ENCODE measurements at regions of chr19 and their contacts with region 1.

Region 1: DNA sequence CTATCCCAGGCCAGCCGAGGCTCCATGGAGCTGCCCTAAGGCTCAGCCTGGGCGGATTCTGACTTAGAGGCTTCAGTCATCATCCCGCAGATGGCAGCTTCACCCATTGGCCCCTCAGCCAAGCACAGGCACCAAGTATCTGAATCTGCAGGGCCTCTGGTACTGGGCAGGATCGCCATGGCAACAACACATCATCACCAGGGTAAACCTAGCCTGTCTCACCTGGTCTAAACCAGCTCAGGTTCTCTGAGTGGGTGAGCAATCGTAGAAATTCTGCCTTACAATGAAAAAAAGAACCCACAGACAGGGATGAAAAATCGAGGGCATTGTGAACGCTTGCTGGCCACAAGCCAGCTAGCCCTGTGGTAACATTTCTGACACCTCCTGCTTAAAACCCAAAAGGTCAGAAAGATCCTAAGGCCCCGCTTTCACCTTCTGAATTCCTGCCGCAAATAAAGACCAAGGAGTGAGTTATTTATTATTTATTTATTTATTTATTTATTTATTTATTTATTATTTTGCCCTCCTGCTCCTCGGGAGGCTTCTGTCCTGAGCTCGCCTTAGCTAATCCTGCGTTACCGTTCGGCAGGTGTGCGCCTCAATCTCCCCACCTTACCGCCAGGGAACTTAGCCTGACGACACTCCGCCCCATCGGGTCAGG is 12.0 kb upstream of the CEACAM21 start:
- DNase-seq: no peak
- H3K4me3 ChIP-seq: no peak overlapping the region
- H3K27ac ChIP-seq: no peak overlapping the region
- H3K4me1 ChIP-seq: peaks cover 3% of the 10 kb centered on the region
- H3K27me3 ChIP-seq: peaks cover 28 to 55% of the 10 kb centered on the region in 2 experiments
- CTCF ChIP-seq: no peak
- POLR2A ChIP-seq: no peak

Region 2: DNA sequence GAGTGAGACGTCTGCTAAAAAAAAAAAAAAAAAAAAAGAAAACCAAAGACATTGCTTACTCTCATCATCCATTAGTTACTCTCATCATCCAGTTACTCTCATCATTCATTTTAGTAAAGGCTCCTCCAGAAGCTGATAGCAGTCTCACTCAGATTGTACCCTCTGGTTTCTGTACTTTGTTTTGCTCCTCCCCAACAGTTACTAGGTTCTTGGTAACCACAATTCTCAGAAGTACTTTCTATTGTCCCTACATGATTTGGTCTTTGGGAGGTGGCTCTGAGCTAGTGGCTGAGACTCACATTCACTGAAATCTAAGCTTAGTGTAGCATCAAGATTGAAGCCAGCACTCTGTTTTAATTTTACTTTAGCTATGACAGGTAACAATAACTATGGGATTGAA is 106.7 kb before region 1 on chr19:
- CTCF ChIA-PET with region 1: interaction called, 343 read pairs
- POLR2A ChIA-PET with region 1: no interaction called
- dilution Hi-C with region 1: no loop called
- intact Hi-C with region 1: no loop called
- DNase-seq: peak; percentile 30
- H3K4me3 ChIP-seq: no peak overlapping the region
- H3K27ac ChIP-seq: peak overlapping the region; percentile 72
- H3K4me1 ChIP-seq: peaks cover 29% of the 10 kb centered on the region
- H3K27me3 ChIP-seq: no peaks in the 10 kb centered on the region
- CTCF ChIP-seq: no peak
- POLR2A ChIP-seq: no peak

Region 3: DNA sequence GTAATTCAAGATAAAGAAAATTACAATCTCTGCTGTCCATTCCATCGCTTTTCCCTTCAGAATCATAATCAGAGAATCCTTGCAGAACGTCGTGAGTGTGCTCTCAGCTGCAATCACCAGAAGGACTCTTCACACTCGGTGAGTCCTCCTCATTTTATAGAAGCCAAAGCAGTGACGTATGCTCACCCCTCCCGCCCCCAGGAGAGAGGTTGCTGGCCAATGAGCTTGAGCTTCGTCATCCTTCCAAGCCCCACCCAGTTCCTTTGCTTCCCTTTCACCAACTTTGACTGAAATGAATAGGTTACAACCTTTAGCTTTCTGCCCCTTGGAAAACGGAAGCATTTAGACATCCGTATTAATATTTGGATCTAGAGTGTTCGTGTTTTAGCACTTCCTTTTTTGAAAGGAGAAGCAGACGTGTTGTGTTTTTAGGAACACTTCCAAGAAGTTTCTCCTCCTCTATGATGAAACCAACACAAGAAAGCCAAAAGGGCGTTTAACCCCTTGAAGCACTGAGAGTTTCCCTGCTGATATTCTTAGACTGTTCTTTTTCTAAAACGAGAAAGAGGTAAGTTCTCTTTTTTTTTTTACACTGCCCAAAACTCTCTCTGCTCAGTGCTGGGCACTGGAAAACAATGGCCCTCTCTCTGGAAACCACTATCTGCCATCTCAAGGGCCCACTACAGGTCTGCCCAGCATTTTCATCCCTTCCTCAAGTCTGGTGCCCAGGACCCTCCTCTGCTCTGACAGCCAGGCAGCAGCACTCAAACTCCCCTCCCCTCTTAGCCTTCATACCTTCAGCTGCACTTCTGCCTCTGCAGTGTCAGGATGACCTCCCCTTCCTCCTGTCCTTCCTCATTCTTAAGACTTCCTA is 32.3 kb before region 1 on chr19:
- CTCF ChIA-PET with region 1: interaction called, 10 read pairs
- POLR2A ChIA-PET with region 1: no interaction called
- dilution Hi-C with region 1: no loop called
- intact Hi-C with region 1: no loop called
- DNase-seq: peak; percentile 98
- H3K4me3 ChIP-seq: no peak overlapping the region
- H3K27ac ChIP-seq: peak overlapping the region; percentile 85
- H3K4me1 ChIP-seq: peaks cover 31% of the 10 kb centered on the region
- H3K27me3 ChIP-seq: peaks cover 17 to 24% of the 10 kb centered on the region in 2 experiments
- CTCF ChIP-seq: no peak
- POLR2A ChIP-seq: peak; percentile 85

Region 4: GRCh38 chr19:41548954-41549688 is 14.9 kb before region 1 on chr19:
- CTCF ChIA-PET with region 1: interaction called, 28 read pairs
- POLR2A ChIA-PET with region 1: no interaction called
- dilution Hi-C with region 1: no loop called
- intact Hi-C with region 1: loop called (anchors 1 kb)
- DNase-seq: peak; percentile 89
- H3K4me3 ChIP-seq: peak overlapping the region in 2 of 3 experiments; percentile 29 to 66
- H3K27ac ChIP-seq: peak overlapping the region; percentile 92
- H3K4me1 ChIP-seq: peaks cover 38% of the 10 kb centered on the region
- H3K27me3 ChIP-seq: no peaks in the 10 kb centered on the region
- CTCF ChIP-seq: no peak
- POLR2A ChIP-seq: peak; percentile 86

Region 5: DNA sequence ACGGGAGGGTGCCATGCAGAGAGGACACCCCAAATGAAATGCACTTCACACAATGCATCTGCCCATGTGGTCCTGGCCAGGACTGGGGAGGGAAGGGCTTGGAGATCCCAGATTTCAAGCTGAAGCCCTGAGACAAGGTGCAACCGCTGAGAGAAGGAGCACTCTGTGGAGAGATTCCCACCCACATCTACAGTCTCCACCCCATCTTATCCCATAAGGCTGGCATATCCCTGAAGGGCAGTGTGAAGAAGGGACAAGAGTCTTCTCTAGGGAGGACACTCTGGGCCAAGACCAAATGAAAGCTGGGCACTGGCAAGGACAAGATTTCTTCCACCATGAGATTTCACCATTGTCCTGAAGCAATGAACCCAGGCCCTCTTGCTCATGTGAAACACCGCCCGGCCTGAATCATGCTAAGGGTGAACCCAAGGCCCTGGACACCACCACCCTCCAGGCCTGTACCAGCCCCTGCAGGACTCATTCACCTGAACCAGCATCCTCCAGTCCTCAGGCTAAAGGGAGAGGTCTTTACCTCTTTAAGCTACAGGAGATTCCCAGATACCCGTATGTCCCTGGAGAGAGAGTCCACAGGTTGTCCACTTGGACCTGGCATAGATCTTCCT is 42.3 kb after region 1 on chr19:
- CTCF ChIA-PET with region 1: no interaction called
- POLR2A ChIA-PET with region 1: no interaction called
- dilution Hi-C with region 1: no loop called
- intact Hi-C with region 1: no loop called
- DNase-seq: no peak
- H3K4me3 ChIP-seq: no peak overlapping the region
- H3K27ac ChIP-seq: no peak overlapping the region
- H3K4me1 ChIP-seq: no peaks in the 10 kb centered on the region
- H3K27me3 ChIP-seq: peaks cover 9% of the 10 kb centered on the region in 2 experiments
- CTCF ChIP-seq: no peak
- POLR2A ChIP-seq: no peak

Region 6: DNA sequence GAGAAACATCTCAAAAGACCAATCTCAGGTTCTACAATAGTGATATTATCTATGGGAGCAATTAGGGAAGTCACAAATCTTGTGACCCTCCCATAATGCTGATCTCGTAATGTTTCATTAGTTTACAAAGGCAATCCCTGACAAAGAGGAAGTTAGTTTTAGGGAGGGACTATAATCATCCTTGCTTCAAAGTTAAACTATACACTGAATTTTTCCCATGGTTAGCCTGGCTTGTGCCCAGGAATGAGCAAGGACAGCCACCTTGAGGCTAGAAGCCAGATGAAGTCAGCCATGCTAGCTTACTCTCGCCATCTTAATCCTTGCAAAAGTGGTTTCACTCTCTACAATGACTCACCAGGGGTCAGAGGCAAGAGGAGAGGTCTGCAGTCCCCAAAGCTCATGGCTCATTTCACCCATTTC is 237.8 kb after region 1 on chr19:
- CTCF ChIA-PET with region 1: no interaction called
- POLR2A ChIA-PET with region 1: no interaction called
- dilution Hi-C with region 1: no loop called
- intact Hi-C with region 1: no loop called
- DNase-seq: no peak
- H3K4me3 ChIP-seq: no peak overlapping the region
- H3K27ac ChIP-seq: no peak overlapping the region
- H3K4me1 ChIP-seq: no peaks in the 10 kb centered on the region
- H3K27me3 ChIP-seq: no peaks in the 10 kb centered on the region
- CTCF ChIP-seq: no peak
- POLR2A ChIP-seq: no peak